Sigmoid colon (tissue), 7 donors: ENCODE measurements at regions of chr9 and their contacts with region 1.

Region 1: GRCh38 chr9:99819856-99820684 is 1.6 kb upstream of the NR4A3 start:
- DNase-seq: peak; percentile 98
- H3K4me3 ChIP-seq: peak overlapping the region; percentile 82 to 89 (median 86)
- H3K27ac ChIP-seq: peak overlapping the region; percentile 98 to 100 (median 98)
- H3K4me1 ChIP-seq: peaks cover 0 to 46% (median 26%) of the 10 kb centered on the region in 4 donors
- H3K27me3 ChIP-seq: peaks cover 0 to 5% (median 0%) of the 10 kb centered on the region in 3 donors
- CTCF ChIP-seq: peak in 1 of 4 experiments; percentile 13
- EP300 ChIP-seq: peak; percentile 99 to 100 (median 99)
- POLR2A ChIP-seq: peak; percentile 30 to 53

Region 2: DNA sequence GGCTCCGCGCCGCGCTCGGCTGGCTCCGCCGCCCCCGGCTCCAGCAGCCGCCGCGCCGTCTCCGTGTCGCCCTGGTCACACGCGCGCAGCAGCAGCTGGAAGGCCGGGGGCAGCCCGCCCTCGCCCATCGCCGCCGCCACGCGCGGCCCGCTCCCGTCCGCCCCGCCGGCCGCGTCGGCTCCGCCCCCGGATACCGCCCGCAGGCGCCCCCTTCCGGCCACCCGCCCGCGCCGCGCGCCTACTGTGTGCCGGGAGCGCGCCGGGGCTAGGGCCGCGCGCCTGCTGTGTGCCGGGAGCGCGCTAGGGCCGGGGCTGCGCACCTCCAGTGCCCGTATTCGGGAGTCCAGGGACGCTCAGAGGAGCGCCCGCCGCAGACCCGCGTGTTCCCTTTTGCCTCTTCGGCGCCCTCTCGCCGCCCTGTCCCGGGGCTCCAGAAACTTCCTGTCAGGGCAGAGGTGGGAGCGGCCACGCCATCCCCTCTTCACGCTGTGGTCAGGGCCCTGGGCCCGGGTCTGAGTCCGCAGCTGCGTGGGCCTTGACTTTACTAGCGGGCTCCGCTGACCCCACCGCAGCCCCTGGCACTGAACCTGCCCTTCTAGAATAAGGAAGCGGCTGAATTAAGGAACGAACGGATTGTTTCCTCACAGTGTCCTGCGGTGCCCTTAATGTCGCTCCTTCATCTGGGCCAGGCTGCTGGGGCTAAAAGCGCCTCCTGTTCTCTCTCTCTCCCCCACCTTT is 1023.5 kb before region 1 on chr9 and contains the start of gene ANKS6:
- intact Hi-C with region 1: loop called (anchors 5 kb)
- DNase-seq: peak; percentile 88
- H3K4me3 ChIP-seq: peak within 1 kb of the TSS; percentile 48 to 78 (median 68)
- H3K27ac ChIP-seq: peak within 1 kb of the TSS; percentile 85 to 90 (median 88)
- H3K4me1 ChIP-seq: peaks cover 0 to 26% (median 20%) of the 10 kb centered on the region in 4 donors
- H3K27me3 ChIP-seq: no peaks in the 10 kb centered on the region
- CTCF ChIP-seq: peak in 2 of 4 experiments; percentile 14 to 35
- EP300 ChIP-seq: no peak
- POLR2A ChIP-seq: peak; percentile 22 to 36
- total RNA-seq, gene ANKS6: 10.2 to 22.8 (median 16.4) TPM

Region 3: GRCh38 chr9:98974994-98975712 is 844.9 kb before region 1 on chr9:
- intact Hi-C with region 1: loop called (anchors 10 kb)
- DNase-seq: peak; percentile 95
- H3K4me3 ChIP-seq: peak overlapping the region; percentile 2 to 37 (median 32)
- H3K27ac ChIP-seq: peak overlapping the region; percentile 76 to 91 (median 80)
- H3K4me1 ChIP-seq: peaks cover 0 to 89% (median 76%) of the 10 kb centered on the region in 4 donors
- H3K27me3 ChIP-seq: no peaks in the 10 kb centered on the region
- CTCF ChIP-seq: peak; percentile 93 to 99 (median 97)
- EP300 ChIP-seq: no peak
- POLR2A ChIP-seq: no peak

Region 4: DNA sequence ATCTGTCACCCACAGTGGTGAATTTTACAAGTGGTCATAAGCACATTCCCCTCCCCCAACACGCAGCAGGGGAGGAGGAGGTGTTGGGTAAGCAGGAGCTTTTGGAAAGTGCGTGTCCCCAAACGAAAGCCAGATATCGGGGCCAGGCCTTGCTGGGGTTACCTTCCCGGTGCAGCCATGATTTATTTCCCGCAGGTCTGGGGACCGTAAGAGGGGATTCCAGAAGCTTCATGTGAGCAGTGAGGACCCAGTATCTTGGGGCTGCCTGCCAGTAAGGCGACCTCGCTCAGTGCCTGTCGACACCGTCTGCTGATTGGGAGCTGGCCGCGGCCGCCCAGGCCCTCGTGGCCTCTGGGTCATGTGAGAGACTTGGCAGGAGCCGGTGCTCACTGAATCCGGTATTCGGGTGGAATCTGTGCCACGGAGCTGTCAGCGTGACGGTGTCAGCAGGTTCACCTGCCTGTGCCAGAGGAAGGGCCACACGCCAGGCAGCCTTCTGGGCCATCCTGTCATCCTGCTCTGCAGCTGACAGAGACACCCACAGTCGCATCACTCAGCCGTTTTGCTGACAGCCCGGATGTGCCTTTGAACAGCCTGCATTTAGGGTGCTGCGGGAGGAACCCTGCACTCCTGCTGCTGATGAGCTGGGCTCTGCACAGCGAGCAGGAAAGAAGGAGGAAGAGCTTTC is 560.7 kb before region 1 on chr9:
- intact Hi-C with region 1: loop called (anchors 5 kb)
- DNase-seq: peak; percentile 93
- H3K4me3 ChIP-seq: peak overlapping the region; percentile 30 to 52 (median 46)
- H3K27ac ChIP-seq: peak overlapping the region; percentile 75 to 79 (median 76)
- H3K4me1 ChIP-seq: peaks cover 0 to 30% (median 14%) of the 10 kb centered on the region in 4 donors
- H3K27me3 ChIP-seq: no peaks in the 10 kb centered on the region
- CTCF ChIP-seq: no peak
- EP300 ChIP-seq: peak in 1 of 4 donors; percentile 85
- POLR2A ChIP-seq: no peak

Region 5: DNA sequence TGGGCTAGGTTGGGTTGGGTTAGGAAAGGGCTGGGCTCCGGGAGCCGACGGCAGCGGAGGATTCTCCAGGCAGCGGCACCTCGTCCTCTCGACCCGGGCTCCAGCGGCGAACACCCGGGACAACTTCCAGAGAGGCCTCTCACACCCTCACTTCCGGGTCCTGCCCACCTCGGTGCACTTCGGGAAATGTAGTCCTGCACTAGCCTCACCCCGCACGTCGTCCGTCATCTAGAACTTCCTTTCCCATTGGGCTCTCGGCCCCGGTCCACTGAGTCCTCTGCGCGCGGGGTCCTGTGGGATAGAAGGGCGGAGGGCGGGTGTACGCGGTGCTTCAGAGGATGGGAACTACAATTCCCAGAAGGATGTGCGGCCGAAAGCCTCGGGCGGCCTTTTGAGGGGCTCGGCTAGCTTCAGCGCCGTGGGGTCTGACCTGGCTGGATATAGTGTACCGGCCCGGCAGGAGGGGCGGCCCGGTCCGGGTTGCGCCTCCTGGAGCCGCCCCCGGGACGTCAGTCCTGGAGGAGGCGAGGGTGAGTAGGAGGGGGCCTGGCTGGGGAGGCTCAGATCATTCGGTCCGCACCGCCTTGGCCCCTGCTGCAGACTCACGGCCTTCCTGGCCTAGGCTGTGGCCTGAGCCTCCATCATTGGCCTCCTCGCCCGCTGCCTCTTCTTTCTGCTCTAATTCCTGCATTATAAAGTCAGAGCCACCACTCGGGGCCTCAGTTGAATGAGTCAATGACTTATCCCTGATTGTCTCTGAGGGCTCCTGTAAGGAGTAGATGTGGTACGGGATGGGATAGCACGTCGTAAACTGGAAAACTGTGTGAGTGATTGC is 279.0 kb after region 1 on chr9 and contains the starts of genes ERP44 and INVS:
- intact Hi-C with region 1: loop called (anchors 2 kb)
- DNase-seq: peak; percentile 99
- H3K4me3 ChIP-seq: peak within 1 kb of the TSS; percentile 83 to 92 (median 86)
- H3K27ac ChIP-seq: peak within 1 kb of the TSS; percentile 88 to 93 (median 92)
- H3K4me1 ChIP-seq: peaks cover 0 to 31% (median 18%) of the 10 kb centered on the region in 4 donors
- H3K27me3 ChIP-seq: no peaks in the 10 kb centered on the region
- CTCF ChIP-seq: no peak
- EP300 ChIP-seq: no peak
- POLR2A ChIP-seq: peak; percentile 81 to 89
- total RNA-seq, gene ERP44: 10.6 to 14.3 (median 12.8) TPM
- total RNA-seq, gene INVS: 27.4 to 41.3 (median 29.3) TPM

Region 6: GRCh38 chr9:100426530-100427428 is 606.7 kb after region 1 on chr9 and contains the start of gene MSANTD3:
- intact Hi-C with region 1: loop called (anchors 10 kb)
- DNase-seq: peak; percentile 77
- H3K4me3 ChIP-seq: peak within 1 kb of the TSS; percentile 83 to 96 (median 92)
- H3K27ac ChIP-seq: peak within 1 kb of the TSS; percentile 92 to 98 (median 96)
- H3K4me1 ChIP-seq: peaks cover 0 to 39% (median 32%) of the 10 kb centered on the region in 4 donors
- H3K27me3 ChIP-seq: no peaks in the 10 kb centered on the region
- CTCF ChIP-seq: peak in 1 of 4 experiments; percentile 18
- EP300 ChIP-seq: no peak
- POLR2A ChIP-seq: no peak
- total RNA-seq, gene MSANTD3: 25.2 to 41.8 (median 31.5) TPM

Region 7: GRCh38 chr9:101530077-101530711 is 1710.1 kb after region 1 on chr9:
- intact Hi-C with region 1: loop called (anchors 10 kb)
- DNase-seq: peak; percentile 69
- H3K4me3 ChIP-seq: no peak overlapping the region
- H3K27ac ChIP-seq: no peak overlapping the region
- H3K4me1 ChIP-seq: peaks cover 2 to 17% (median 16%) of the 10 kb centered on the region in 4 donors
- H3K27me3 ChIP-seq: no peaks in the 10 kb centered on the region
- CTCF ChIP-seq: peak; percentile 19 to 75 (median 71)
- EP300 ChIP-seq: no peak
- POLR2A ChIP-seq: no peak